CD14-positive monocyte (primary cell): ENCODE measurements at regions of chrX and their contacts with region 1.

Region 1: DNA sequence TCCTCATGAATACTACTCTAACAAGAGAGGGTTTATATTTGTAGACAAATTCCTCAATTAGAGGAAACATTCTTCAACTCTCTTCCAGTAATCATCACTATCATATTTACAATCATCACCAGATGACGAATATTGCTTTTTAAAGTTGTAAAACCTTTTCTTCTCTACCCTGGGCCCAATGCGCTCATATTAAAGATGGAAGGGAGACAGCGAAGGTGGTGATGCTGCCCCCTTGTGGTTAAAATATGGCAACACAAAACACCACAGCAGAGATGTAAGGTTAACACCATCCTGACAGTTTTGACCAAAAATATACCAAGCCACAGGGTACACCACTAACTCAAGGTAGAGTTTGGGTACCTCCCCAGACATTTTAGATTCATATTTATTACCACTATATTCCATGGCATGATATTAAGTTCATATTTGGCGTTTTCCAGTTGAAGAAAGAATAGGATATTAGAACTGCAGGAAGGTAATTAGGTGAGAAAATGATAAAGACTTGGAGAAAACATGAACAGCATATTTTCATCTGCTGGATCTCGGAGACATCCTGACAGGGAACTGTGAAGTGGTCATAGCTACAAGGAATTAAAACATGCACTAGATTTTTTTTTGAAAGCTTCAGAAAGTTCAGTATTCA is 72.8 kb downstream of the SLC9A7 start:
- DNase-seq: peak; percentile 33 to 50 (median 47)
- H3K4me3 ChIP-seq: no peak overlapping the region
- H3K4me3 Mint-ChIP-seq: no peak overlapping the region
- H3K27ac ChIP-seq: no peak overlapping the region
- H3K27ac Mint-ChIP-seq: no peak overlapping the region
- H3K4me1 ChIP-seq: peaks cover 0 to 5% of the 10 kb centered on the region in 2 donors
- H3K4me1 Mint-ChIP-seq: peaks cover 13% of the 10 kb centered on the region
- H3K27me3 ChIP-seq: no peaks in the 10 kb centered on the region
- H3K27me3 Mint-ChIP-seq: peaks cover 0 to 4% (median 0%) of the 10 kb centered on the region in 3 donors
- CTCF ChIP-seq: peak; percentile 59

Region 2: GRCh38 chrX:46554942-46555341 is 131.2 kb before region 1 on chrX:
- intact Hi-C with region 1: loop called in 1 of 2 experiments (anchors 2 kb)
- DNase-seq: peak in 2 of 3 donors; percentile 32 to 42
- H3K4me3 ChIP-seq: no peak overlapping the region
- H3K4me3 Mint-ChIP-seq: no peak overlapping the region
- H3K27ac ChIP-seq: no peak overlapping the region
- H3K27ac Mint-ChIP-seq: peak overlapping the region in 3 of 7 donors; percentile 24 to 46 (median 37)
- H3K4me1 ChIP-seq: no peaks in the 10 kb centered on the region
- H3K4me1 Mint-ChIP-seq: no peaks in the 10 kb centered on the region
- H3K27me3 ChIP-seq: no peaks in the 10 kb centered on the region
- H3K27me3 Mint-ChIP-seq: peaks cover 0 to 13% (median 3%) of the 10 kb centered on the region in 3 donors
- CTCF ChIP-seq: peak; percentile 54